Transverse colon (tissue), 4 donors: ENCODE measurements at regions of chr21 and their contacts with region 1.

Region 1: DNA sequence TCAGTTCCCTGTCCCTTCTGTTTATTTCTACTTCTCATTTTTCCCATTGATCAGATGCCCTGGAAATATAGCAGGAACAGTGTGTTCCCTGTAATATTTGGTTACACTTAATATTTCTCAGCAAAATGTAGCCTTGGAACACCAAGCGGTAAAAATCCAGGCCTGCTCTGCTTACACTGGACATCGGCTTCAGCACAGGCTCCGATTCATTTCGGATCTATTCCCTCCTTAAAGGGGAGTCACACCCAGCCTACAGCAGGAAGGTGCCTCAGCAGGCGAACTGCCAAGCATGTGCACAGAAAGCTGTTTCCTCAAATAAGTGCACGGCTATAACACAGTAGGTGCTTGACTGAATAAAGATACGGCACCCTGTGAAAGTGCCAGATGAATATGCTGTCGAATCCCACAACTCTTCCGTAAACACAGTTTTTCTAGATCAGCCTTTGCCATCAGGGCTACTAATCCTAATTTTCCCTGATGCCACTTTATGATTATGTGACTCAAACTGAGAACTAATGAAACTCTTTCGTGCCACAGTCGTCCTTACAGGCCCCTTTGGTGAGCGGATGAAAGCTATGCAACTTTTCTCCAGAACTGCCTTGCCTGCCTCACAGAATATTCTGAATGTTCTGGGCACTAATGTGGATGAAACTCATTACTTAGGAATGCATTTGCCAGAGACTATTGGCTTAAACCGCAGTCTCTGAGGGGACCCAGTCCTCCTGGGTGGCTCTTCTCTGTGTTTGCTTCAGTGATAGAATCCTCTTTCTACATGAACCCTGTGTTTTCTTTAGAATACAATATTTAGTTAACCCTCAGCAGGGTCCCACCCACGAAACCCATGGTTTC is 275.5 kb upstream of the RUNX1 start:
- DNase-seq: peak; percentile 14
- H3K4me3 ChIP-seq: no peak overlapping the region
- H3K27ac ChIP-seq: peak overlapping the region; percentile 67 to 85 (median 74)
- H3K4me1 ChIP-seq: peaks cover 9 to 14% (median 11%) of the 10 kb centered on the region in 4 donors
- H3K27me3 ChIP-seq: no peaks in the 10 kb centered on the region
- CTCF ChIP-seq: no peak
- EP300 ChIP-seq: peak; percentile 20
- POLR2A ChIP-seq: no peak

Region 2: GRCh38 chr21:35051287-35051818 is 273.2 kb before region 1 on chr21:
- in situ Hi-C with region 1: no loop called
- intact Hi-C with region 1: loop called (anchors 5 kb)
- DNase-seq: peak; percentile 89
- H3K4me3 ChIP-seq: no peak overlapping the region
- H3K27ac ChIP-seq: peak overlapping the region; percentile 72 to 77 (median 73)
- H3K4me1 ChIP-seq: peaks cover 15 to 42% (median 28%) of the 10 kb centered on the region in 4 donors
- H3K27me3 ChIP-seq: no peaks in the 10 kb centered on the region
- CTCF ChIP-seq: peak; percentile 47 to 80 (median 64)
- EP300 ChIP-seq: no peak
- POLR2A ChIP-seq: peak; percentile 15

Region 3: GRCh38 chr21:35138665-35139381 is 185.8 kb before region 1 on chr21:
- in situ Hi-C with region 1: no loop called
- intact Hi-C with region 1: no loop called
- DNase-seq: no peak
- H3K4me3 ChIP-seq: no peak overlapping the region
- H3K27ac ChIP-seq: no peak overlapping the region
- H3K4me1 ChIP-seq: peaks cover 0 to 6% (median 1%) of the 10 kb centered on the region in 4 donors
- H3K27me3 ChIP-seq: no peaks in the 10 kb centered on the region
- CTCF ChIP-seq: no peak
- EP300 ChIP-seq: no peak
- POLR2A ChIP-seq: no peak

Region 4: GRCh38 chr21:35226948-35227744 is 97.5 kb before region 1 on chr21:
- in situ Hi-C with region 1: loop called in 1 of 4 experiments (anchors 25 kb)
- intact Hi-C with region 1: no loop called
- DNase-seq: peak; percentile 39
- H3K4me3 ChIP-seq: no peak overlapping the region
- H3K27ac ChIP-seq: peak overlapping the region in 1 of 4 donors; percentile 50
- H3K4me1 ChIP-seq: no peaks in the 10 kb centered on the region
- H3K27me3 ChIP-seq: no peaks in the 10 kb centered on the region
- CTCF ChIP-seq: no peak
- EP300 ChIP-seq: no peak
- POLR2A ChIP-seq: no peak

Region 5: DNA sequence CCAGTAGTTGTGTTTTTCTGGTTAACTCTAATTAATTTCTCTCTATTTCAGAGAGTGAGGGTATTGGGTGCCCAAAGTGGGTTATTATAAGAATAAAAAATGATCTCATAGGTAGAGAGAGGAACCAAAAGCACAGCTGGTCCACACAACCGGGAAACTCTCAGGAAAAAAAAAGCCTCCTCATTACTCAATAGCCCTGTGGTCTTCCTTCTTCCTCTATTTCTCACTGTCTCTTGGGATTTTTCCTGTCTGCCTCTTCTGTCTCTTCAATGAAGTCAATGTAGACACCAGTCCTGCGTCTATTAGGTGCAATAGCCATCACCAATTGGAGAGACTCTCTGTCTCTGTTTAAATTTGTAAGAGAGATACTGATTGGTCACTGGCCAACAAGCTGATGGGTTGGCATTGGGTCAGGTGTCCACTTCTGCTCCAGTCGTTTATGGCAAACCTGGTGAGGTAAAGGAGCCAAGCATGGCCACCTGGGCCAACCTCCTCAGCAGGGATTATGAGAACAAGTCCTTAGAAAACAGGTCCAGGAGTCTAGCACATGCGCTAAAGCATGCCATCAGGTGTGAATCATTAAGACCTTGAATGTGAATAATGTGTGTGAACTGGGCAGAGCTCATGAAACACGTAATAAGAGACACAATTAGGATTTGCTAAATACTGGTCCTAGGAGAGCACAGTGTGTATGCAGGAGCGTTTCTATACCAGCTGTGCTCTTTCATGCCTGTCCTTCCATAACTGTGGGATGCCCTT is 167.5 kb after region 1 on chr21:
- in situ Hi-C with region 1: no loop called
- intact Hi-C with region 1: no loop called
- DNase-seq: no peak
- H3K4me3 ChIP-seq: no peak overlapping the region
- H3K27ac ChIP-seq: no peak overlapping the region
- H3K4me1 ChIP-seq: no peaks in the 10 kb centered on the region
- H3K27me3 ChIP-seq: no peaks in the 10 kb centered on the region
- CTCF ChIP-seq: no peak
- EP300 ChIP-seq: no peak
- POLR2A ChIP-seq: no peak